HEK293 (cell line): ENCODE measurements at regions of chr2 and their contacts with region 1.

Region 1: DNA sequence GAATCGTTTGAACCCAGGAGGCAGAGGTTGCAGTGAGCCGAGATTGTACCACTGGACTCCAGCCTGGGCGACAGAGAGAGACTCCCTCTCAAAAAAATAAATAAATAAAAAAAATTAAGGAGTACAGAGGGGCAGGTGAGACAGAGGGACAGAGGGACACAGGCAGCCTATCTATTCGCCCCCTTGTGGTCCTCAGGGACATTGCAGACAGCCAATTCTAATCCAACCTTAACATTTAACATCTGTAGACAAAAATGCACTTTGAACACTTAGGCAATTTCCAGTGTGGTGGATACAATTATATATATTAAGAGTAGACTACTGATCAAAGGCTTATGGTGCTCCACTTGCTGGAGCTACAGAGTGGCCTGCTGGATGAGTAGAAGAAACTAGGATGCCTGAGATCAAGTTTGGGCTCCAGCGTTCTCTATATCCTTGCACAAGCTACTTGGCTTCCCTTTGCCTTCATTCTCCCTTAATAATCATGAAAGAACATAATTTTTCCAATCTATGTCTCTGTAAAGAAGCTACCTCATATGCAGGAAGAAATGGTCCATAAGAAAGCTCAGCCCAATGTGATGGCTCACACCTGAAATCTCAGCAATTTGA is 8.2 kb upstream of the SMARCAL1 start:
- H3K4me3 ChIP-seq: no peak overlapping the region
- H3K27ac ChIP-seq: no peak overlapping the region
- H3K4me1 ChIP-seq: no peaks in the 10 kb centered on the region
- CTCF ChIP-seq: peak; percentile 27; the same call in 1 of the 2 replicates

Region 2: DNA sequence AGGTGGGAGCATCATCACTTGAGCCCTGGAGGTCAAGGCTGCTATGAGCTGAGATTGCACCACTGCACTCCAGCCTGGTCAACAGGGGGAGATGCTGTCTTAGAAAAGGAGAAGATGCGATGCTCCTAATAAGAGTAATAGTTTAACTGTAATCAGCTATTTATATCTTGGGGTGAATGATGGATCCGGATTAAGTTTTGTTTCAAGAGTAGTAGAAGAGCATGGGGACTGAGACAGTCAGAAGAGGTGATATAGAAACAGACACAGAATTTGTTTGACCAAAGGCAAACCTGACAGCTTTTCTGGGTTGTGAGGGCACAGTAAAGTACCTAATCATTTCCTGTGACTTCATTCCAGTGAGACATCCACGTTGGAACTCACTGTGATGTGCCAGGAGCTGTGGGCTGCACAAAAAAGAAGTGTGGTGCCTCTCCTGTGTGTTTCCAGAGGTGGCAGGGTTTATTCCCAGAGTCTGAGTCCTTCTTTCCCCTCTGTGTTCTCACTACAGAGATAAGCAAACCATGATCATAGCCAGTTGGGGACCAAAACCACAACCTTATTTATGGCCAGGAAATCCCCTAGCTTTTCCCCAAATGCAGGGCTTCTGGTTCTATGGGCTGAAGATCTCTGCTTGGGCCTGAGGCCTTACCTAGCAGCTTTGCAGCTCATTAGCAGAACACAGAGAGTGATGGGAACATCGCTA is 181.3 kb before region 1 on chr2:
- CTCF ChIA-PET with region 1: interaction called, 28 read pairs
- POLR2A ChIA-PET with region 1: no interaction called
- H3K4me3 ChIP-seq: no peak overlapping the region
- H3K27ac ChIP-seq: no peak overlapping the region
- H3K4me1 ChIP-seq: no peaks in the 10 kb centered on the region
- CTCF ChIP-seq: no peak

Region 3: GRCh38 chr2:216379977-216380376 is 24.1 kb before region 1 on chr2:
- CTCF ChIA-PET with region 1: interaction called, 11 read pairs
- POLR2A ChIA-PET with region 1: no interaction called
- H3K4me3 ChIP-seq: no peak overlapping the region
- H3K27ac ChIP-seq: no peak overlapping the region
- H3K4me1 ChIP-seq: no peaks in the 10 kb centered on the region
- CTCF ChIP-seq: no peak

Region 4: GRCh38 chr2:216415541-216415940 is 11.4 kb after region 1 on chr2:
- CTCF ChIA-PET with region 1: interaction called, 11 read pairs
- POLR2A ChIA-PET with region 1: no interaction called
- H3K4me3 ChIP-seq: no peak overlapping the region
- H3K27ac ChIP-seq: no peak overlapping the region
- H3K4me1 ChIP-seq: no peaks in the 10 kb centered on the region
- CTCF ChIP-seq: no peak